ENCODE measurements at regions of chr11 and their contacts with region 1.

Region 1: DNA sequence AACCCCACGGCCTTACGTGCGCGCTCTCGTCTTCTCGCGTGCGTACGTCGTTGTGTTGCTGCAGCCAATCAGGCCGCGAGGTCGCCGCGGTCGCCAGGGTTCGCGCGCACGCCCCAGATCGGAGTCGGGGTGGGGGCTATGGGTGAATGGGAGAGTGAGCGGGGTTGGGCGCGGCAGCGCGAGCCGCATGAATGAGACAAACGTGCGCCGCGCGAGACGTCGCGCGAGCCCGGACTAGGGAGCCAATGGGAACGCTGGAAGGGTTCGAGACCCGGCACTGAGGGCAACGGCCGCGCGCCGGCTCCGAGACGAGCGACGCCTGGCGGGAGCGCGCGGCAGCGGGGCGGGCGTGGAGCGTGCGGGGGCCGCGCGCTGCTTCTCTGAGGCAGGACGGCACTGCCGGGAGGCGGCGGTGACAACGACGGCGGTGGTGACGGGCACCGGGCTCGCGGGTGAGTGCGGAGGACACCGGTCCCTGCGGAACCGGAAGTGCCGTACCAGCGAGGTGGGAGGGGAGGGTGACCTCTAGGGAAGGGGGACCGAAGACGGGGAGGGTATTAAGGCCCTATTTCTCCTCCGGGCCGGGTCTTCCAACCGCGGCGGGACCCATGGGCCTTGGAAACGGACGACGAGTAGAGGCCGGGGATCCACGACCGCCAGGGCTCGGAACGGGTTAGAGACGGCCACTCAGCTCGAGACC is at the start of gene ZDHHC5:
- DNase-seq: peak; percentile 99
- ATAC-seq: peak; percentile 87
- H3K4me3 ChIP-seq: peak within 1 kb of the TSS; percentile 97
- H3K27ac ChIP-seq: peak within 1 kb of the TSS; percentile 88
- H3K4me1 ChIP-seq: peaks cover 16% of the 10 kb centered on the region
- H3K27me3 ChIP-seq: no peaks in the 10 kb centered on the region
- CTCF ChIP-seq: peak; percentile 39; the same call in 1 of the 2 replicates
- total RNA-seq, gene ZDHHC5: 86.7 and 102 TPM in 2 replicates

Region 2: DNA sequence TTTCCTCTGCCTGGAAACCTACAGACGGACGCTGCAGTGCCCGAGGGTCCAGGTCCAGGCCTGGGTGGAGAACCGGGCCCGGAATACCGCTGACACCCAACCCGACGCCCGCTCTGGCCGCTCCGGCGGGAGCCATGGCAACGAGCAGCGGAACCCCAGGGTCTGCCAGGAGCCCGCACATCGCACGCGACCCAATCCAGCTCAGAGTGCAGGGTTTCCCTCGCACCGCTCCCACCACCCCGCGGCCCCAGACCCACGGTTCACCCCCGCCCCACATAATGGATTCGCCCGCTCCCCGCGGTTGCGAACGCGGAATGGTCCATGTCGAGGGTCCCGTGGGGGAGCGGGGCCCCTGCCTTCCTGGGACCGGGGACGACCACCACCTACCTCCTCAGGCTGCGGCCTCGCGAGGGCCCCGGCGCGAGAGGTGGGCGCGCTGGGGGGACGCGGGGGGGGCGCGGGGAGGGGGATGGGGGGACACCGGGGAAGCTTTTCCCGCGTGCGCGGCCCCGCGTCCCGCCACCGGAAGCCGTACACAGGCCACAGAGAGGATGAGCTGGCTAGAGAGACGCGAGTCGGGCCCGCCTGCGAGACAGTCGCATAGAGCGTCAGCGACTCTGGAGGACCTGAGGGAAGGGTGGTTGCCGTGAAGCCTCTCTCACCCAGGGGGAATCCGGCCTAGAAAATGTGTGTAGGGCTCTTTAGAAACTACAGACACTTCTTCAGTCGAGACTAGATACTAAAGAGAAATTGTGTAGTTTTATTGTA is 332.4 kb before region 1 on chr11 and contains the start of gene SSRP1:
- CTCF ChIA-PET with region 1: no interaction called
- POLR2A ChIA-PET with region 1: interaction called, 3 read pairs
- intact Hi-C with region 1: loop called (anchors 1 kb)
- DNase-seq: peak; percentile 92
- ATAC-seq: peak; percentile 99
- H3K4me3 ChIP-seq: peak within 1 kb of the TSS; percentile 87
- H3K27ac ChIP-seq: peak within 1 kb of the TSS; percentile 51
- H3K4me1 ChIP-seq: peaks cover 23% of the 10 kb centered on the region
- H3K27me3 ChIP-seq: no peaks in the 10 kb centered on the region
- CTCF ChIP-seq: 0 out of 2 replicates have a peak, but pooled peaks have one; percentile 9
- total RNA-seq, gene SSRP1: 228 and 341 TPM in 2 replicates

Region 3: DNA sequence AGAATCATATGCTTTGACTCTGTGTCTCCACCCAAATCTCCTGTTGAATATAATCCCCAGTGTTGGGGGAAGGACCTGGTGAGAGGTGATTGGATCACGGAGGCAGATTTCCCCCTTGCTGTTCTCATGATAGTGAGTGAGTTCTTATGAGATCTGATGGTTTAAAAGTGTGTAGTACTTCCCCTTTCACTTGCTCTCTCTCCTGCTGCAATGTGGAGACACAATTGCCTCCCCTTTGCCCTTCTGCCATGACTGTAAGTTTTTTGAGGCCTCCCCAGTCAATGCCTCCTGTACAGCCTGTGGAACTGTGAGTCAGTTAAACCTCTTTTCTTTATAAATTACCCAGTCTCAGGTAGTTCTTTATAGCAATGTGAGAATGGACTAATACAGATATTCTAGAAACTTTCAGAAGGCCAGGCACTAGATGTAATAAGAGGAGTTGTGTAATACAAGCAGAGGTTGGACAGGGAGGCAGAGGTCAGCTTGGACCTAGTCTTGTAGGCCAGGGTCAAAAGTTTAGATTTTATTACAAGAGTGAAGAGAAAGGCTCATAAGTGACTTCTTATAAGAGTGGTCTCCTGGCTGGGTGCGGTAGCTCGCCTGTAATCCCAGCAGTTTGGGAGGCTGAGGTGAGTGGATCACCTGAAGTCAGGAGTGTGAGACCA is 79.7 kb before region 1 on chr11:
- CTCF ChIA-PET with region 1: no interaction called
- POLR2A ChIA-PET with region 1: no interaction called
- intact Hi-C with region 1: no loop called
- DNase-seq: no peak
- ATAC-seq: no peak
- H3K4me3 ChIP-seq: no peak overlapping the region
- H3K27ac ChIP-seq: no peak overlapping the region
- H3K4me1 ChIP-seq: no peaks in the 10 kb centered on the region
- H3K27me3 ChIP-seq: peaks cover 10% of the 10 kb centered on the region
- CTCF ChIP-seq: no peak

Region 4: DNA sequence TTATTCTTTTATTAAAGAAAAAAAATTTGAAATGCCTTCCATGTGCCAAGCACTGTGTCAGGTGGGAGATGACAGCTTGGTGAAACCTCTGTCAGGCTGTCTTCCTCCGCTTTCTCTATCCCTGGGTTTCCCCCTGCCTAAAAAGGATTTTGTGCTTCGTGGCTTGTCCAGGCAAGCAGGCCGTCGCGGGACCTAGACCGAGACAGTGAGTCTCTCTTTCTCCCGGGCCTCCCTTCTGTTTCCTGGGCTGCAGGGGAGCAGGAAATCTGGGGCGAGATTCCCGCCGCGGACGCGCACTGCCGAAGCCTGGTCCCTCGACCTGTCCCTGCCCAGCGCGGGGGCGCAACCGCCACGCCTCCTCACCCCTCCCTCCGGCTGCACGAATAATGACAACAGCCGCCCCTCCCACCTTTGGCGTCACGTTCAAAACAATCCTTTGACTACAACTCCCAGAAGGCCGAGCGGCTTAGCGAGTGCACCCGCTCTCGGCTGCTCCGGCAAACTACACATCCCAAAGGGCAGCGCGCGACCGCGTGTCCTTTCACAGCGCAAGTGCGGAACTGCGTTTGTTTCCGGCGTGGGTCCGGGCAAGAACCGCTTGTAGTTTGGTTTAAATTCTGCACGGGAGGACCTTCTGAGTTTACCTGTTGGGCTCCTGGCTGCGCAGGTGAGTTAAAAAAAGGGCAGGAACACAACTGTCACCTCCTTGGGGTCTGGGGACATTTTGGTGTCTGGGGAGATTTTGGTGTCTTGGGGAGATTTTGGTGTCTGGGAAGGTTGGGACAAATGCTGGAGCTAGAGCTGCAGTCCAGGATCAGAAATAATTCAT is 10.5 kb before region 1 on chr11 and contains the start of gene CLP1:
- CTCF ChIA-PET with region 1: no interaction called
- POLR2A ChIA-PET with region 1: no interaction called
- intact Hi-C with region 1: loop called (anchors 1 kb)
- DNase-seq: peak; percentile 100
- ATAC-seq: peak; percentile 98
- H3K4me3 ChIP-seq: peak within 1 kb of the TSS; percentile 94
- H3K27ac ChIP-seq: 0 out of 2 replicates have a peak within 1 kb of the TSS, but pooled peaks have one; percentile 11
- H3K4me1 ChIP-seq: peaks cover 8% of the 10 kb centered on the region
- H3K27me3 ChIP-seq: no peaks in the 10 kb centered on the region
- CTCF ChIP-seq: no peak
- total RNA-seq, gene CLP1: 23.0 and 28.4 TPM in 2 replicates

Region 5: DNA sequence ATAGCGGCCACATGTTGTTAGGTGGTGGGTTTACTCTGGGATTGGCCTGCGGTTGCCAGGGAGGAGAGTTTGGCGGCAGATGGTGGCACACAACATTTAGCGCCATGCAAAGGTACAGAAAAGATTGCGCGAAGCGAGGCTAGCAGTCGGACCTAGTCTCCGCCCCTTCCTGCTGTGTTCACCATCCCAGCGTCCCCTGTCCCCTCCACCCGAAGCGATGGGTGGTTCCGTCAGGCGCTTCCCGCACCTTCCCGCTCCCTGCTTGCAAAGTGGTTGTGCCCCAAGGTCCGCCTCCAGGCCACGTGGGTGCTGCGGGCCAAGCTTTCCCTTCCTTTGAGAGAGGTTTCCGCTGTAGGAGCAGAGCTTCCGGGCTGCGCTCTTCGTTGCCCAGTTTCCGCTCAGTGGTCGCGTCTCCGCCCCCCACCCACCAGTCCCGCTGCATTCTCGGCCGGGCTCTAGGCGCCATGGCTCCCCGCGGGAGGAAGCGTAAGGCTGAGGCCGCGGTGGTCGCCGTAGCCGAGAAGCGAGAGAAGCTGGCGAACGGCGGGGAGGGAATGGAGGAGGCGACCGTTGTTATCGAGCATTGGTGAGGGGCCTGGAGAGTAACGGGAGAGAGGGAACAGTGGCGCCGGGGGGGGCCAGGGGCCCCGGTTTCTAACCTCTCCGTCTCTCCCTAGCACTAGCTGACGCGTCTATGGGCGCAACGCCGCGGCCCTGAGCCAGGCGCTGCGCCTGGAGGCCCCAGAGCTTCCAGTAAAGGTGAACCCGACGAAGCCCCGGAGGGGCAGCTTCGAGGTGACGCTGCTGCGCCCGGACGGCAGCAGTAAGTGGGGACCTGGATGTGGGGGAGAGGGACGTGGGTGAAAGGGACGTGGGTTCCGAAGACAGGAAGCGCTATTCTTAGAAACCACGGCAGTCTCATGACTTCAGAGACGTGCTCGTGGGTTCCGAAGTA is 73.5 kb after region 1 on chr11 and contains the start of gene SELENOH:
- CTCF ChIA-PET with region 1: no interaction called
- POLR2A ChIA-PET with region 1: no interaction called
- intact Hi-C with region 1: loop called (anchors 1 kb)
- DNase-seq: peak; percentile 98
- ATAC-seq: peak; percentile 94
- H3K4me3 ChIP-seq: peak within 1 kb of the TSS; percentile 90
- H3K27ac ChIP-seq: peak within 1 kb of the TSS; percentile 46
- H3K4me1 ChIP-seq: peaks cover 11% of the 10 kb centered on the region
- H3K27me3 ChIP-seq: no peaks in the 10 kb centered on the region
- CTCF ChIP-seq: no peak
- total RNA-seq, gene SELENOH: 306 and 353 TPM in 2 replicates